Activated naive CD4-positive, alpha-beta T cell treated with anti-CD3 and anti-CD28 coated beads, Interleukin-2, amount 10 ng/mL, durations not matched to agents 7 days and 5 days (primary cell): ENCODE measurements at regions of chr15 and their contacts with region 1.

Region 1: GRCh38 chr15:78909791-78910228 is 35.0 kb downstream of the CTSH start:
- DNase-seq: peak; percentile 47
- H3K4me3 Mint-ChIP-seq: no peak overlapping the region
- H3K27ac Mint-ChIP-seq: peak overlapping the region; percentile 5
- H3K4me1 Mint-ChIP-seq: peaks cover 33% of the 10 kb centered on the region
- H3K27me3 Mint-ChIP-seq: no peaks in the 10 kb centered on the region

Region 2: DNA sequence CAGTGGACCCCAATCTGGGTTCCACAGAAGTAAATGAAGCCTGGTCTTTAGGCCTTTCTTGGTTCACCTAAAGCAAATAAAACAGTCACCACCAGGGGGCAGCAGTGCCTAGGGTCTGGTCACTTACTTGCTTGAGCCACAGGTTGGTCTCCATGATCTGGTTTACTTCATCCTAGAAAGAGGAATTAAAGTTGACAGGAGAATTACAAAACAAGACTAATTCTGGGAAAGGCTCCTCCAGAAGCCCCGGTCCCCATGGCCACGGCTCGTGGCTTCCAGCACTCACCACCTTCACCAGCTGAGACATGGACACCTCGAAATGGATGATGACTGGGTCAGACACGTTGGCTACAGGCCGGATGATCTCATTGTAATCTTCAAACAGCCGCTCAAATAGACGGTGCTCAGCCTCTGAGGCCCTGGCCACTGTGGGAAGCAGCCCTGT is 291.3 kb before region 1 on chr15:
- CTCF ChIA-PET with region 1: no interaction called
- DNase-seq: peak; percentile 87
- H3K4me3 Mint-ChIP-seq: no peak overlapping the region
- H3K27ac Mint-ChIP-seq: no peak overlapping the region
- H3K4me1 Mint-ChIP-seq: peaks cover 20% of the 10 kb centered on the region
- H3K27me3 Mint-ChIP-seq: peaks cover 76% of the 10 kb centered on the region

Region 3: GRCh38 chr15:78979456-78980320 is 69.9 kb after region 1 on chr15:
- CTCF ChIA-PET with region 1: interaction called, 36 read pairs
- DNase-seq: peak; percentile 53
- H3K4me3 Mint-ChIP-seq: no peak overlapping the region
- H3K27ac Mint-ChIP-seq: no peak overlapping the region
- H3K4me1 Mint-ChIP-seq: peaks cover 9% of the 10 kb centered on the region
- H3K27me3 Mint-ChIP-seq: peaks cover 44% of the 10 kb centered on the region

Region 4: GRCh38 chr15:79004336-79004735 is 94.5 kb after region 1 on chr15:
- CTCF ChIA-PET with region 1: interaction called, 30 read pairs
- DNase-seq: no peak
- H3K4me3 Mint-ChIP-seq: no peak overlapping the region
- H3K27ac Mint-ChIP-seq: peak overlapping the region; percentile 42
- H3K4me1 Mint-ChIP-seq: peaks cover 14% of the 10 kb centered on the region
- H3K27me3 Mint-ChIP-seq: peaks cover 27% of the 10 kb centered on the region

Region 5: DNA sequence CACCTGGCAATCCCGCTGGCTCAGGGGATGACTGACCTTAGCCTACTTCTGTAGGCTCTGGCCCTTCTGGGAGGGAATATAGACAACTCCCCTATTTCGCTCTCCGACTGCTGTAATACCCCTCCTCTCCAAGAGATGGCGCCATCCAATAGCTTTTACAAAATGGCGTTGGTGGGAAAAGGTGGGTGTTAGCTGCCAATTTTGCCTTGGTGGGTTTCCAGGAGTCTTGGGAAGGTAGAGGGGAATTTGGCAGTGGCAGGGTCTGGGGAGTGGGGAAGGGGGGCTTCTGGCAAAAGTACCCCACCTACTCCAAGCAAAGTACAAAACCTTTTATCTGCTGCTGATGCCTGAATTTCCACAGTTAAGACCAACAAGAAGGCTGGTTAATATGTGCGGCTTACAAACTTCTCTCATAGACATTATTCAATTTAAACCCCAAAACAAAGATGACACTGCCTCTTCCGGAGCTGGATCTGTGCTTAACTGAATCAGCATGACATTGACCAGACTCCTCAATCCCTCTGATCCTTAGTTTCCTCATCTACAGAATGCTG is 118.7 kb after region 1 on chr15:
- CTCF ChIA-PET with region 1: interaction called, 10 read pairs
- DNase-seq: peak; percentile 56
- H3K4me3 Mint-ChIP-seq: no peak overlapping the region
- H3K27ac Mint-ChIP-seq: no peak overlapping the region
- H3K4me1 Mint-ChIP-seq: no peaks in the 10 kb centered on the region
- H3K27me3 Mint-ChIP-seq: peaks cover 6% of the 10 kb centered on the region

Region 6: DNA sequence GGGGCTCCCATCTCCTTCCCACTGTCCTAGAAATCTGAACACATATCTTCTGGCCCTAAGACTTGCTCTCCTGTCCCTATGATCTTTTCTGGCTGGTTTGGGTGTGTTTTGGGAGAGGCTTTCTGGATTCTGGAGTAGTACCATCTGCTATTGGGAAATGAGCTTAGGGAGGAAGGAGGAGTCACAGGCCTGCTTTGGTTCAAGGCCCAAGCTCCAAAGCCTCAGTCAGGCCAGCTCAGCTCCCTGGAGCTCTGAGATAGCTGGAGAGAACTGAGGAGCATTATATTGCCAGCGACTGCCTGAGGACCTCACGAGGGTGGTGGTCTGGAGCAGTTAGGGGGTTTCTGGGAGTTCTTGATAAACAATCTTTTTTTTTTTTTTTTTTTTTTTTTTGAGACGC is 162.1 kb after region 1 on chr15:
- CTCF ChIA-PET with region 1: no interaction called
- DNase-seq: no peak
- H3K4me3 Mint-ChIP-seq: no peak overlapping the region
- H3K27ac Mint-ChIP-seq: no peak overlapping the region
- H3K4me1 Mint-ChIP-seq: no peaks in the 10 kb centered on the region
- H3K27me3 Mint-ChIP-seq: peaks cover 20% of the 10 kb centered on the region

Region 7: DNA sequence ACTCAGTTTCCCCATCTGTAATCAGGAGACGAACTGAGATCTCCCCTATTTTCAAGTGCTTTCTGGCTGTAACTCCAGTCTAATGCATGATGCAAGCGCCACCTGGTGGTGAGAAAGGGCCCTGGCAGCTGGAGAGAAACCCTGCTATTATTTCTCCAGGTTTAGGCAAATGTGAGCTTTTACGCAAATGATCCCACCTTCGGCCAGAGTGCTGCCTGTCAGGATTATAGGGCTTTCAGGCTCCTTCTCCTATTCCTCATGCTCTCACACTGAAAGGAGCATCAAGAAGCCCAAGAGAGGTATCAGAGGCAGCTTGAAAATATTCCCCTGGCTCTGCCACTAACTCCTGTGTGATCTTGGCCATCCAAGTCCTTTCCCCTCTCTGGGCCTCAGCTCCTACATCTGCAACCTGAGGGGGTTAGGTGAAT is 274.7 kb after region 1 on chr15:
- CTCF ChIA-PET with region 1: interaction called, 26 read pairs
- DNase-seq: peak; percentile 79
- H3K4me3 Mint-ChIP-seq: no peak overlapping the region
- H3K27ac Mint-ChIP-seq: no peak overlapping the region
- H3K4me1 Mint-ChIP-seq: no peaks in the 10 kb centered on the region
- H3K27me3 Mint-ChIP-seq: peaks cover 18% of the 10 kb centered on the region